Activated B cell treated with CpG ODN at 0.5 μM for 24 hours (primary cell): ENCODE measurements at regions of chr12 and their contacts with region 1.

Region 1: GRCh38 chr12:101830367-101831325 is at the start of gene GNPTAB:
- DNase-seq: peak; percentile 97
- ATAC-seq: peak; percentile 94
- H3K4me3 Mint-ChIP-seq: peak within 1 kb of the TSS; percentile 96
- H3K27ac Mint-ChIP-seq: peak within 1 kb of the TSS; percentile 87
- H3K4me1 Mint-ChIP-seq: peaks cover 33% of the 10 kb centered on the region
- H3K27me3 Mint-ChIP-seq: no peaks in the 10 kb centered on the region
- CTCF ChIP-seq: no peak
- total RNA-seq, gene GNPTAB: 41.8 and 42.8 TPM in 2 replicates

Region 2: DNA sequence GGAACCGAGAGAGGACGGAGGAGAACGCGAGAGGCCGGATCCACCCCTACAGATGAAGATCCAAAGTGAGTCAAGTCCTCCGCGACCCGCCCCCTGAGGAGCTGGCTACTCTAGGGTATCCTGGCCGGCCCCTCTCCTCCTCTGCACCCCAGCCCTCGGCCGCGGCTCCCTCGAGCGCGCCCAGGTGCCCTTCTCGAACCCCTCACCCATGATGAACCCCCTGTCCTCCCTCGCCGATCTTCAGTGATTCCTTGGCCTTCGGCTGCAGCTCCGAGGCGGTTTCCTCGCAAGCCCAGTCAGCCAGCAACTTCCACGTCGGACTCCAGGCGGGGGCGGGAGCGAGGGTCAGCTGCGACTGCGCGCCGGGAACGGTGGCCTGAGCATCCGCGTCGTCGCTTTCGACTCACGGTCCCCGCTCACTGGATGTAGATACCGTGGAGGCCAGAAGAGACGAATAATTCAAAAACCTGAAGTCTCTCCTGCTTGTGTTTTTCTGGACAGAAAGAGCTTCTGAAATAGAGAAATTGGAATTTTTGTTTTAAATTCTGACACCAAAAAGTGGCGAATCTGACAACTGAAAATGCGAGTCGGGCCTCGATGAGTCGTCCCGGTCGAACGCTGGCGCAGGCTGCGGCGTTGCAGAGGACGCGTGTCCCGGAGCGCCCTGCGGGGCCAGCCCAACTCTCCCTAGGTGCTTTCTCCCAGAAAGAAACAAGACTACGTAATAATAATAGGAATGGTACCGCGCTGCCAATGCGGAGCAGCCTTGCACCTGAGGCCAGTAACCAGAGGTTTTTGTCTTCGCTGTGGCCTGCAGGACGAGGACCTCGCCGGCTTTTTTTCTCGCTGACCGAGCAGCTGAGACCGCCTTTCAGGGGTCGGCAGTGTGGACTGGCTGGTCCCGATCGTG is 423.0 kb before region 1 on chr12 and contains the start of gene ARL1:
- CTCF ChIA-PET with region 1: interaction called, 6 read pairs
- POLR2A ChIA-PET with region 1: interaction called, 16 read pairs
- intact Hi-C with region 1: no loop called
- DNase-seq: peak; percentile 74
- ATAC-seq: peak; percentile 87
- H3K4me3 Mint-ChIP-seq: peak within 1 kb of the TSS; percentile 99
- H3K27ac Mint-ChIP-seq: peak within 1 kb of the TSS; percentile 97
- H3K4me1 Mint-ChIP-seq: peaks cover 24% of the 10 kb centered on the region
- H3K27me3 Mint-ChIP-seq: no peaks in the 10 kb centered on the region
- CTCF ChIP-seq: no peak
- total RNA-seq, gene ARL1: 45.4 and 49.5 TPM in 2 replicates

Region 3: GRCh38 chr12:101570047-101570446 is 260.6 kb before region 1 on chr12:
- CTCF ChIA-PET with region 1: no interaction called
- POLR2A ChIA-PET with region 1: no interaction called
- intact Hi-C with region 1: loop called (anchors 2 kb)
- DNase-seq: no peak
- ATAC-seq: peak; percentile 34
- H3K4me3 Mint-ChIP-seq: no peak overlapping the region
- H3K27ac Mint-ChIP-seq: no peak overlapping the region
- H3K4me1 Mint-ChIP-seq: peaks cover 4% of the 10 kb centered on the region
- H3K27me3 Mint-ChIP-seq: peaks cover 7% of the 10 kb centered on the region
- CTCF ChIP-seq: no peak

Region 4: GRCh38 chr12:101743724-101744472 is 86.7 kb before region 1 on chr12:
- CTCF ChIA-PET with region 1: interaction called, 14 read pairs
- POLR2A ChIA-PET with region 1: interaction called, 5 read pairs
- intact Hi-C with region 1: loop called (anchors 1 kb)
- DNase-seq: peak; percentile 54
- ATAC-seq: peak; percentile 88
- H3K4me3 Mint-ChIP-seq: peak overlapping the region; percentile 36
- H3K27ac Mint-ChIP-seq: peak overlapping the region; percentile 96
- H3K4me1 Mint-ChIP-seq: peaks cover 69% of the 10 kb centered on the region
- H3K27me3 Mint-ChIP-seq: no peaks in the 10 kb centered on the region
- CTCF ChIP-seq: no peak

Region 5: DNA sequence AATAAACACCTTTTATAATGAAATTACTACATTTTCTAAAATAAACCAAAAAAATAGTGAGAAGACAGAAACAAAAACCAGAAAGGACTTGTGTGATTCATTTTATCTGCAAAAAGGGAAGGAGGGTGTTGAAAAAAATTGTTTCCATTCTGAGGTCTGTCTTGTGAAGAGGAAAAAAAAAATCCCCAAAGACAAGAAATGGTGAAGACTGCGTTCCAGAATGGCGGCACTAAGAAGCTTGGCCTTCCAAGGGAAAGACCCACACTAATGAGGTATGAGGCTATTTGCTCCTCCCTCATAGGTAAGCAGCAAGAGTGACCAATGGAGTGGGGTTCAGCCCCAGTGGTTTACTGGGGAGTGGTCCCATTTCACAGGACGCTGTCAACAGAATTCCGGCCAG is 34.9 kb before region 1 on chr12:
- CTCF ChIA-PET with region 1: interaction called, 3 read pairs
- POLR2A ChIA-PET with region 1: interaction called, 5 read pairs
- intact Hi-C with region 1: loop called (anchors 2 kb)
- DNase-seq: no peak
- ATAC-seq: peak; percentile 40
- H3K4me3 Mint-ChIP-seq: no peak overlapping the region
- H3K27ac Mint-ChIP-seq: peak overlapping the region; percentile 50
- H3K4me1 Mint-ChIP-seq: peaks cover 15% of the 10 kb centered on the region
- H3K27me3 Mint-ChIP-seq: no peaks in the 10 kb centered on the region
- CTCF ChIP-seq: no peak

Region 6: DNA sequence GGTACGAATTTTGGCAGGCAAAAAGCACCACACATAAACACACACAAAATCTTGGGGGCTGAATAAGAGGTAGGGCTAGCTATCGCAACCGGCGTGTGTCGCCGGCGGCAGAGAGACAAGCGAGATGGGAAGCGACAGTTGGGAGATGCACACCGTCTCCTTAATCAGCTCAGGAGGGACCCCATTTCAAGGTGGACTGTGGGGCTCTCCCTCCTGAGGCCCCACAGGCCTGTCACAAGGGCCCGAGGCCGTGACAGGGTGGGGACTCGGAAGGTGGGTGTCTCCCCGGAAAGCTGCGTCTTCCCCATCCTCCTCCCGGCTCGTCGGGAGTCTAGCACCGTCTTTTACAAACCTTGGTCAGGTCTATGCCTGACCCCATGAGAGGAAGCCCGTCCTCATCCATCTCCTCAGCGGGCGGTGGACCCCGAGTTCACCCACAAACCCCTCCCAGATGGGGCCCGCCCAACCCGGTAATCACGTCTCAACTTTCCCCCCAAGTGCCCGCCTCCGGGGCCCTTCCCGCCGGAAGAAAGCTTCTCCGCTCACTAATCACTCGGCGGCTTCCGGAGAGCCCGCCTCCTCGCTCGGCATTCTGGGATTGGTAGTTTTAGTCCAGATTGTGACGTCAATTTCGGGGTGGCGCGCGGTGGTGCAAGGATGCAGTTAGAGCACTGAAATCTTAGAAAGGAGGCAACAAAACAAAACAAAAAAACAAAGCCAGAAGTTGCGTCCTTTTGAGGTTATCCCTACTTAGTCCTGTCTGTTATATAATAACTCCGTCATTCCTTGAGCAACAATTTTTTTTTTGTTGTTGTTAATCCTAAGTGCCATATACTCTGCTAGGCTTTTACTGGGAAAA is 231.1 kb after region 1 on chr12 and contains the start of gene WASHC3:
- CTCF ChIA-PET with region 1: no interaction called
- POLR2A ChIA-PET with region 1: no interaction called
- intact Hi-C with region 1: loop called (anchors 1 kb)
- DNase-seq: peak; percentile 89
- ATAC-seq: peak; percentile 95
- H3K4me3 Mint-ChIP-seq: peak within 1 kb of the TSS; percentile 98
- H3K27ac Mint-ChIP-seq: peak within 1 kb of the TSS; percentile 97
- H3K4me1 Mint-ChIP-seq: peaks cover 21% of the 10 kb centered on the region
- H3K27me3 Mint-ChIP-seq: no peaks in the 10 kb centered on the region
- CTCF ChIP-seq: no peak
- total RNA-seq, gene WASHC3: 47.3 and 50.6 TPM in 2 replicates